AG04450 (cell line): ENCODE measurements at regions of chr20 and their contacts with region 1.

Region 1: DNA sequence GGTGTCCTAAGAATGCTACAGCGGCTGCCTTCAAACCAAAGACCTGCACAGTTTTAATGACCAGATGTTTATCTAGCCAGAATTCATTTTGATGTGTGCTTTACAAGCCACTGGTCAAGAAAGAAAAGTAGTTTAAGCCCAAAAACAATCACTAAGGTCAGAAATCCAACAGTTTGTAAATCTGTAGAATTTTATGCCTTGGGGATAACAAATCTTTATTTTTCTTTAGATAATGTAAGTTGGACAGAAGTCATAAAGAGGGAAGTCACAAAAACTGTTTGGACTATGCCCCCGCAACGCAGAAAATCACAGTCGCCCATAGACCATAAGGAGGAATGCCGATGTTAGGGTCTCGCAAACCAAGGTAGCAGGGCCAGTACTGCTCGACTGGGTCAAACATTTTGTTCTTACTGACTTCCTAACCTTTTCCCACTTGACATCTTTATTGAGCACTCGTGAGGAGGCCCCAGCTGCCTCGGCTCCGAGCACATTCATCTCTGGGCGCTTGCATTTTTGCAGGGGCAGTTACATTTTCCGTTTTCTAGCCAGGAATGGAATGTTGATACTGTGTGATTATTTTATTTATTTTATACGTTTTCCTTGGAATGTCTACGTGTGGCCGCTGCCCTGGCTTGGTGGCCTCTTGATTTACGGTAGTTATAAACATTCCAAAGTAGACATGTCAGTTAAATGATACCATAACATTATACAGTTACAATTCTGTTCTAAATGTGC is 56.7 kb upstream of the APCDD1L start:
- DNase-seq: peak; percentile 65
- H3K4me3 ChIP-seq: no peak overlapping the region
- H3K27ac ChIP-seq: peak overlapping the region; percentile 84
- H3K27me3 ChIP-seq: no peaks in the 10 kb centered on the region
- CTCF ChIP-seq: no peak

Region 2: GRCh38 chr20:58511364-58511763 is 60.5 kb before region 1 on chr20:
- CTCF ChIA-PET with region 1: no interaction called
- POLR2A ChIA-PET with region 1: no interaction called
- DNase-seq: peak; percentile 47
- H3K4me3 ChIP-seq: no peak overlapping the region
- H3K27ac ChIP-seq: no peak overlapping the region
- H3K27me3 ChIP-seq: no peaks in the 10 kb centered on the region
- CTCF ChIP-seq: no peak

Region 3: DNA sequence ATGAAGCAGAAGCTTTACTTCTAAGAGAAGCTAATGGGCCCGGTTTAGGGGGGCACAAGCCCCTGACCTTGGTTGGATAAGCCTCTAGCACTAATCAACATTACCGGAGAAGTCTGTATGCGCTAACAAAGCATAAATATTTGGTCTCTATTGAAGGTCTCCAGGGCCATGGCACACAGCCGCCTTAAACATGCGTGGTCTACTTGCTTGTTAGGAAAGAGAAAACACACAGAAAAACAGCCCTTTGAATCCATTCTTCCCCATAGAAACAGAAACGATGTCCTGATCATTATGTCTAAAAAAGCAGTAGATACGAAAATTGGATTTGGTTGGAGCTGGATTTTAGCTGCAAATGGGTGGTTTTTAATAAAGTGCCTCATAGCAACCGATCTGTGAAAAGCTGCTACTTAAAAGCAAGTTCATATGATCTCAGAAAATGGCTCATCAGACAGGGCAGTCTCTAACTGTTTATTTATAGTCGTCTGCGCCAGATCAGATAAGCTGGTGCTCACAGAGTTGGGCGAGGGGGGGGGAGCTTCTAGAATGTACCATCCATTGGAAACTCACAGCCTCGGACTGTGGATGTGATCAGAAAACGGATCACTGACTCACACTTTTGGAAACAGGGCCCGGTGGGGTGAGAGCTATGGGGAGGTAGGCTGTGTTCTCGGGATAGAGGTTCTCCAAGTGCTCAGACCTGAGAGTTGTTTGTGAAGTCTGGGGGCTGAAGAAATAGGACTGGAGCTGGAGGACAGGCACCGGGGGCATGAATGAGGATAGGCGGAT is 21.4 kb before region 1 on chr20:
- CTCF ChIA-PET with region 1: no interaction called
- POLR2A ChIA-PET with region 1: interaction called, 10 read pairs
- DNase-seq: peak; percentile 80
- H3K4me3 ChIP-seq: no peak overlapping the region
- H3K27ac ChIP-seq: peak overlapping the region; percentile 22
- H3K27me3 ChIP-seq: no peaks in the 10 kb centered on the region
- CTCF ChIP-seq: no peak

Region 4: GRCh38 chr20:58810116-58810878 is 238.4 kb after region 1 on chr20:
- CTCF ChIA-PET with region 1: no interaction called
- POLR2A ChIA-PET with region 1: interaction called, 12 read pairs
- DNase-seq: no peak
- H3K4me3 ChIP-seq: no peak overlapping the region
- H3K27ac ChIP-seq: no peak overlapping the region
- H3K27me3 ChIP-seq: peaks cover 13% of the 10 kb centered on the region
- CTCF ChIP-seq: no peak